ENCODE measurements at regions of chr15 and their contacts with region 1.

Region 1: GRCh38 chr15:41811432-41812195 is 16.3 kb upstream of the JMJD7 start:
- DNase-seq: peak; percentile 61
- H3K4me3 Mint-ChIP-seq: no peak overlapping the region
- H3K27ac Mint-ChIP-seq: no peak overlapping the region
- H3K4me1 Mint-ChIP-seq: peaks cover 24% of the 10 kb centered on the region
- H3K27me3 Mint-ChIP-seq: no peaks in the 10 kb centered on the region

Region 2: DNA sequence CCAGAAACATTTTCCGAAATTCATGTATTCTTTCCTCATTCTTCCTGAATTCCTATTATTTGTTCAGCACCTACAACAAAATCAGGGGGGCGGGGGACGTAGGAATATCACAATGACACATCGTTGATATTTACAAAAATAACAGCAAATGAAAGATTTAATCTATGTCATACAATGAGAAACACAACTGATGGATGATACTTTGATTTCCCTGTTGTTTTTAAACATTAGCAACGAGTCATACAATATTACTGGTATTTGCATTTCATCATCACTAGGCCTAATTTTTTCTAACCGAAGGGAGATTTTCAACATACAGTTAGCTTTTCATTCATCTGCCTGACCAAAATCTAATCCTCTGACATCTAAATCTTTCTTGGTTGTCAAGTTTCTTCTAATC is 650.3 kb before region 1 on chr15:
- intact Hi-C with region 1: no loop called
- DNase-seq: no peak
- H3K4me3 Mint-ChIP-seq: no peak overlapping the region
- H3K27ac Mint-ChIP-seq: no peak overlapping the region
- H3K4me1 Mint-ChIP-seq: peaks cover 15% of the 10 kb centered on the region
- H3K27me3 Mint-ChIP-seq: peaks cover 5% of the 10 kb centered on the region

Region 3: GRCh38 chr15:41557673-41558399 is 253.8 kb before region 1 on chr15:
- intact Hi-C with region 1: loop called (anchors 1 kb)
- DNase-seq: peak; percentile 43
- H3K4me3 Mint-ChIP-seq: peak overlapping the region; percentile 92
- H3K27ac Mint-ChIP-seq: peak overlapping the region; percentile 89
- H3K4me1 Mint-ChIP-seq: peaks cover 19% of the 10 kb centered on the region
- H3K27me3 Mint-ChIP-seq: peaks cover 46% of the 10 kb centered on the region

Region 4: GRCh38 chr15:41568350-41569017 is 243.1 kb before region 1 on chr15:
- intact Hi-C with region 1: no loop called
- DNase-seq: no peak
- H3K4me3 Mint-ChIP-seq: no peak overlapping the region
- H3K27ac Mint-ChIP-seq: no peak overlapping the region
- H3K4me1 Mint-ChIP-seq: no peaks in the 10 kb centered on the region
- H3K27me3 Mint-ChIP-seq: peaks cover 7% of the 10 kb centered on the region

Region 5: DNA sequence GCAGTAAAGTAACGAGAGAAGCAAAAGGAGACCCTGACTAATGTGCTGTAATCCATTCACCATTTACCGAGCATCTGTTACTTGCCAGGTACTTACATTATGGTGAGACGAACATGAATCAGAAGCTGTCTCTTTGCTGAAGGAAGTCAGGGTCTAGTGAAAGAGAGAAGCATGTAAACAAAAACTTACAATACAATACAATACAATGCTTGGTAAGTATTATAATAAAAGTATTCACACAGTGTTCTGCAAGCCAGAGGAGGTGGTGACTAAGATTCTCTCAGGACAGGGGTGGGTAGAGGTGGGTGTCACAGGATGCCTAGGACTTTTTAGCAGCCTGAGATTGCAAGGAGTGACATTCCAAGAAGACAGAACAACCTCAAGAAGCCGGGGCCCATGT is 201.6 kb before region 1 on chr15:
- intact Hi-C with region 1: no loop called
- DNase-seq: no peak
- H3K4me3 Mint-ChIP-seq: no peak overlapping the region
- H3K27ac Mint-ChIP-seq: no peak overlapping the region
- H3K4me1 Mint-ChIP-seq: peaks cover 6% of the 10 kb centered on the region
- H3K27me3 Mint-ChIP-seq: peaks cover 17% of the 10 kb centered on the region

Region 6: GRCh38 chr15:41695750-41696426 is 115.7 kb before region 1 on chr15:
- intact Hi-C with region 1: loop called (anchors 1 kb)
- DNase-seq: peak; percentile 34
- H3K4me3 Mint-ChIP-seq: peak overlapping the region; percentile 28
- H3K27ac Mint-ChIP-seq: peak overlapping the region; percentile 81
- H3K4me1 Mint-ChIP-seq: peaks cover 38% of the 10 kb centered on the region
- H3K27me3 Mint-ChIP-seq: no peaks in the 10 kb centered on the region

Region 7: DNA sequence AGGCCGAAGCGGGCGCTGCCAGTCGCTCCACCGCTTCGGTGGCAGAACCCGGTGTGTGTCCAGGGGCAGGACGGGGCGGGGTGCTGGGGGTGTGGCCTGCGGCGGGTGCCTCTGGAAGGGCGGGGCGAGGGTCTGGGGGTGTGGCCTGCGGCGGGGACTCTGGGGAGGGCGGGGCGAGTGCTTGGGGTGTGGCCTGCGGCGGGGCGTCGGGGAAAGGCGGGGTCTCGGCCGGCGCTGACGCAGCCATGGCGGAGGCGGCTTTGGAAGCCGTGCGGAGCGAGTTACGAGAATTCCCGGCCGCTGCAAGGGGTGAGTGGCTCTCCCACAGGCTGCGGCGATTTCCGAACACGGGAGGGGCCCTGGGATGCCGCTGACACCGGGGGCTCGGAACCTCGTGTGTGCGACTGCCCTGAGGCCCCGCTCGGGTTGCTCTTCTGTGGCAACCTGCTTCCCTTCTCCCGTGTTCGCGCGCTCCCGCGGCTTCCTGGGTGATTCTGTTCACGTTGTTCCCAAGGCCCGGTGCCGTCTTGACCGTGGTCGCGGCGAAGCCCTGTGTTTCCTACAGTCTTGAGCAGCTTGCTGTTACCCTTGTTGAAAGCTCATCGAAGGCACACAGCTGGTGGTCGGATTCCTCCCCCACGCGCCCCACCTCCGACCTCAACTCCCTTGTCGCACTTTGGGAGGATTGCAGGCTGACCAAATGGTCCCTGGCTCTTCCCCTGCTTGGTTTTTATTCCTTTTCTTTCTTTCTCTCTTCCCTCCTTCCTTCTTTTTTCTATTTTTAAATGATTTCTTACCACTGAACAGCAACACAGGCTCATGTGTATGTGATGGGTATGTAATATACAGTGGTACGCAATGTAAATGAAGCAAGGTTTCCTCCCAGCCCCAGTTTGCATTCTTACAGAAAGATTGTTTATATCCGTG is 16.5 kb after region 1 on chr15 and contains the start of gene JMJD7:
- intact Hi-C with region 1: loop called (anchors 1 kb)
- DNase-seq: peak; percentile 88
- H3K4me3 Mint-ChIP-seq: peak within 1 kb of the TSS; percentile 86
- H3K27ac Mint-ChIP-seq: peak within 1 kb of the TSS; percentile 72
- H3K4me1 Mint-ChIP-seq: peaks cover 34% of the 10 kb centered on the region
- H3K27me3 Mint-ChIP-seq: no peaks in the 10 kb centered on the region
- total RNA-seq, gene JMJD7: 14.2 and 17.8 TPM in 2 replicates